ENCODE measurements at regions of chr9 and their contacts with region 1.

Region 1: GRCh38 chr9:84397151-84397728 is 56.7 kb upstream of the SLC28A3 start:
- DNase-seq: peak; percentile 48 to 90 (median 71)
- H3K4me3 ChIP-seq: no peak overlapping the region
- H3K27ac ChIP-seq: no peak overlapping the region
- H3K4me1 ChIP-seq: no peaks in the 10 kb centered on the region
- H3K27me3 ChIP-seq: no peaks in the 10 kb centered on the region
- CTCF ChIP-seq: peak; percentile 69 to 92 (median 88)
- POLR2A ChIP-seq: no peak

Region 2: GRCh38 chr9:84570482-84571154 is 173.4 kb after region 1 on chr9:
- intact Hi-C with region 1: no loop called
- DNase-seq: no peak
- H3K4me3 ChIP-seq: no peak overlapping the region
- H3K27ac ChIP-seq: no peak overlapping the region
- H3K4me1 ChIP-seq: no peaks in the 10 kb centered on the region
- H3K27me3 ChIP-seq: no peaks in the 10 kb centered on the region
- CTCF ChIP-seq: no peak
- POLR2A ChIP-seq: no peak

Region 3: DNA sequence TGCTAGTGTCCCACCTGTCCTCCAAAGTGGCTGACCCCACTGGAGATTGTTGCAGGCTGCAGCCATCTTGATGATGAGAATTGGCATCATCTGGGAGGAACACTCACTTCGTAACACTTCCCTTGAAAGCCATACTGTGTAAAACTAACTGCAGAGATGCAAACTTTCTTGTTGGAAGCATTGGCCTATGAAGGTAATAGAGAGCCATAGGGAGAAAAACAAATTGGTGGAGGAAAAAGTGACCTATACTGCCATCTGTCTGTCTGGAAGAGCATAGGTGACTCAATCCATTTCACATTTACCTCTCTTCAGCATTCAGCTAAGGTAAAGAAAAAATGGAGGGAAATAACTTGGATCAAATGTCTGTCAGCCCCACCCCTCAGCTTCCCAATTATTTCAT is 745.7 kb after region 1 on chr9:
- intact Hi-C with region 1: loop called in 1 of 2 experiments (anchors 10 kb)
- DNase-seq: no peak
- H3K4me3 ChIP-seq: no peak overlapping the region
- H3K27ac ChIP-seq: no peak overlapping the region
- H3K4me1 ChIP-seq: no peaks in the 10 kb centered on the region
- H3K27me3 ChIP-seq: no peaks in the 10 kb centered on the region
- CTCF ChIP-seq: peak in 4 of 6 experiments; percentile 14 to 49 (median 40)
- POLR2A ChIP-seq: no peak

Region 4: GRCh38 chr9:85600675-85601263 is 1203.5 kb after region 1 on chr9:
- intact Hi-C with region 1: loop called in 1 of 2 experiments (anchors 10 kb)
- DNase-seq: no peak
- H3K4me3 ChIP-seq: no peak overlapping the region
- H3K27ac ChIP-seq: no peak overlapping the region
- H3K4me1 ChIP-seq: no peaks in the 10 kb centered on the region
- H3K27me3 ChIP-seq: no peaks in the 10 kb centered on the region
- CTCF ChIP-seq: no peak
- POLR2A ChIP-seq: no peak

Measured in adrenal gland (tissue), 19 donors.